ENCODE measurements at regions of chr20 and their contacts with region 1.

Region 1: DNA sequence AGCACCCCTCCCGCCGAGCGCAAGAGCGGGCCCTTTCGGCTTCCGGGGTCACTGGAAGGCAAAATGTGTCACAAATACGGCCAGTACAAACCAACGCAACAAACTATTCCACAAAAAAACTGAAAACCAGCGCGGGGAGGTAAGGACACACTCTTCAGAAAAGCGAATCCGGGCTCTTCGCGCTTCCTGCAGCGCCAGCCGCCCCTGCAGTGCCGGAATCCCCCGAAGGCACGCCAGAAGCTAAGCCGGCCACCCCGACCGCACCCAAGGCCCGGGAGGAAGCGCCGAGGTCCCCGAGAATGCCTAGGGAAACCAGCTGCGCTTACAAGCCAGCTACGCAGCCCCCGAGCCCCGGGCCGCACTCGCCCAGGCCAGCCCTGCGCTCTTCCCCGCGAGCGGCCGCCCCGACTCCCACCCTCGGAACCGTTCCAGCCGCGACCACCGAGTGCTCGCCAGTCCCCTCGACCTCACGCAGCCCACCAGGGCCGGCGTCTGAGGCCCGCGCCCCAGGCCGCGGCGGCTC is 528 bp downstream of the DIDO1 start:
- DNase-seq: peak in 3 of 5 donors; percentile 47 to 64 (median 64)
- H3K4me3 ChIP-seq: peak overlapping the region; percentile 76
- H3K27ac ChIP-seq: peak overlapping the region; percentile 96 to 98
- H3K4me1 ChIP-seq: peaks cover 29% of the 10 kb centered on the region
- H3K27me3 ChIP-seq: no peaks in the 10 kb centered on the region
- CTCF ChIP-seq: no peak
- EP300 ChIP-seq: no peak
- POLR2A ChIP-seq: no peak

Region 2: GRCh38 chr20:62668441-62669027 is 257.2 kb before region 1 on chr20:
- intact Hi-C with region 1: no loop called
- DNase-seq: peak; percentile 60 to 83 (median 78)
- H3K4me3 ChIP-seq: no peak overlapping the region
- H3K27ac ChIP-seq: no peak overlapping the region
- H3K4me1 ChIP-seq: no peaks in the 10 kb centered on the region
- H3K27me3 ChIP-seq: no peaks in the 10 kb centered on the region
- CTCF ChIP-seq: peak; percentile 55 to 79 (median 78)
- EP300 ChIP-seq: no peak
- POLR2A ChIP-seq: no peak

Region 3: DNA sequence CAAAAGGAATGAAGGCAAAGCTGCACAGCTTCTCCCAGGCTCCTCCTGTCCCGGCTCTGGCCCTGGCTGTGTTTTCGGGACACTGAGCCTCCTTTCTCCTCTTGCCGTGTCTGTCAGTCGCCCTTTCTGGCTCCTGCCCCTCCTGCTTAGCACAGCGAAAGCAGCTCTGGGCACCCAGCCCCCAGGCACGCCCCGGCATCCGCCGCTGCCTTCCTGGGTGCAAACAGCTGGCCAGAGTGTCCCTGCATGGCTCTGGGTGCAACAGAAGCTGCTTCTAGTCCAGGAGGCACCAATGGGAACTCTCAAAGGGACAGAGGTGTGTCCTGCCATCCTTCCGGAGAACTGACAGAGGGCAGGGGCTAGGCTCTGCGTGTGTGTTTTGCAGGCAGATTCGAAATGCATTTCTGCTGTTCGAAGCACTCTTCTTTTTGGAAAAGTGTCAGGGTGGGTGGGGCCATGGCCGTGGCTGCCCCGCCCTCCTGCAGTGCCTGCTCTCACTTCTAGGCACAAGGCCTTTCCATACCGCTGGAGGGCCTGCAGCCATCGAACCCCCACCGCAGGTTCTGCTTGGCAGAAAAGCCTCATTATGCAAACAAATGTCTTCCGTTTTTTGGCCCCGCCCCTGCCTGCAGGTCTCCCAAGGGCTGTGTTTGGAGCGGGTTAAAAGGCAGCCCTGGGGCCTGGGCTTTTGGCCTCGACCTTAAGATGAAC is 93.4 kb before region 1 on chr20:
- intact Hi-C with region 1: no loop called
- DNase-seq: peak in 4 of 5 donors; percentile 48 to 69 (median 62)
- H3K4me3 ChIP-seq: no peak overlapping the region
- H3K27ac ChIP-seq: no peak overlapping the region
- H3K4me1 ChIP-seq: peaks cover 7% of the 10 kb centered on the region
- H3K27me3 ChIP-seq: no peaks in the 10 kb centered on the region
- CTCF ChIP-seq: peak in 1 of 3 donors; percentile 6
- EP300 ChIP-seq: no peak
- POLR2A ChIP-seq: no peak

Region 4: GRCh38 chr20:62907384-62908317 is 18.1 kb before region 1 on chr20:
- intact Hi-C with region 1: loop called in 1 of 4 experiments (anchors 2 kb)
- DNase-seq: no peak
- H3K4me3 ChIP-seq: no peak overlapping the region
- H3K27ac ChIP-seq: no peak overlapping the region
- H3K4me1 ChIP-seq: no peaks in the 10 kb centered on the region
- H3K27me3 ChIP-seq: no peaks in the 10 kb centered on the region
- CTCF ChIP-seq: no peak
- EP300 ChIP-seq: no peak
- POLR2A ChIP-seq: no peak

Measured in ovary (tissue), 10 donors.